CD14-positive monocyte (primary cell): ENCODE measurements at regions of chr14 and their contacts with region 1.

Region 1: GRCh38 chr14:96735526-96735925 is 61.7 kb upstream of the VRK1 start:
- DNase-seq: no peak
- H3K4me3 ChIP-seq: no peak overlapping the region
- H3K4me3 Mint-ChIP-seq: peak overlapping the region in 1 of 2 donors; percentile 41
- H3K27ac ChIP-seq: no peak overlapping the region
- H3K27ac Mint-ChIP-seq: no peak overlapping the region
- H3K4me1 ChIP-seq: peaks cover 8 to 9% of the 10 kb centered on the region in 2 donors
- H3K4me1 Mint-ChIP-seq: peaks cover 11% of the 10 kb centered on the region
- H3K27me3 ChIP-seq: peaks cover 16 to 29% of the 10 kb centered on the region in 2 donors
- H3K27me3 Mint-ChIP-seq: peaks cover 30 to 60% (median 45%) of the 10 kb centered on the region in 3 donors
- CTCF ChIP-seq: no peak

Region 2: GRCh38 chr14:96442355-96442754 is 293.2 kb before region 1 on chr14:
- intact Hi-C with region 1: no loop called
- DNase-seq: no peak
- H3K4me3 ChIP-seq: no peak overlapping the region
- H3K4me3 Mint-ChIP-seq: no peak overlapping the region
- H3K27ac ChIP-seq: no peak overlapping the region
- H3K27ac Mint-ChIP-seq: no peak overlapping the region
- H3K4me1 ChIP-seq: no peaks in the 10 kb centered on the region
- H3K4me1 Mint-ChIP-seq: peaks cover 1% of the 10 kb centered on the region
- H3K27me3 ChIP-seq: no peaks in the 10 kb centered on the region
- H3K27me3 Mint-ChIP-seq: peaks cover under 1 to 7% (median 5%) of the 10 kb centered on the region in 3 donors
- CTCF ChIP-seq: no peak

Region 3: DNA sequence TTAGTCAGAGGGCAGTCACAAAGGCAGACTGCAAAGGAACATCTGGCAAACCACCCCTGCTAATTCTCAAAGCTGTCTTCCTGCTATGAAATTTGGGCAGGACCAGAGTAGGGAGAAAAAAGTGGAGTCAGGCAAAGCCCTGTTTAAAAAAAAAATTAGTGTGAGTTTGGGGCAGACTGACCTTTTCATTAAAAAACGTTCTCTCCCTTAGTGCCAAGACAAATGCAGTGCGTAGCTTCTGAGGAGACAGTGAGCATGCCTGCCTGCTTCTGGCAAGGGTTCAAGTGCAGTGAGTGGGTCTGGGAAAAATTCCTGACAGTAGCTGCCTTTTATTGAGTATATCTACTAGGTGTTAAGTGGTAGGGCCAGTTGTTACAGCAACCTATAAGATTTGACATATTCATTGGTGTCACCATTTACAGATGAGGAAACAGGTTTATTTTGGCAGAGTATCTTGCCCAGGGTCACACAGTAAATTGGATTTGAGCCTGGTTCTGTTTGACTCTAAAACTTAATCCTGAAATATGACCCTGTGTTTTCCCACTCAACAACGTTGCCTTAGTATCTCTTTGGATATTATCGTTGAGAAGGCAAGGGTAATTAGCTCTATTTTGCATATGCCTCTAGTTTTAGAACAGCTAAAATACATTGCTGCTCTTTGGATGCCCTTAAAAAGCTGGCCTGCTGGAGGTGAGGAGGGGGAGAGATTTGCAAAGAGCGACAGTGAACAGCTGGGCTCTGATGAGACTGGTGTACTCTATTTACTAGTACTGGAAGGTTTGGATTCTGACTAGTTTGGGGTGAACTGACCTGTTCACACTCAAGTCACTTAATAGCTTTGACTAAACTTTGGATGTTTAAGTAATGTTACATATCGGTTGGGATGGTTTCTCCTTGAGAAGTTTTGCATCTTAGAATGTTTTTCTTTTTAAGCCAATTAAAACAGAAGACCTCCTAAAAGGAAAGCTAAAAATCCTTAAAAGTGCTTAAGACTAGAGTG is 160.6 kb before region 1 on chr14:
- intact Hi-C with region 1: loop called in 1 of 2 experiments (anchors 10 kb)
- DNase-seq: no peak
- H3K4me3 ChIP-seq: no peak overlapping the region
- H3K4me3 Mint-ChIP-seq: no peak overlapping the region
- H3K27ac ChIP-seq: no peak overlapping the region
- H3K27ac Mint-ChIP-seq: peak overlapping the region in 2 of 7 donors; percentile 12 to 28
- H3K4me1 ChIP-seq: no peaks in the 10 kb centered on the region
- H3K4me1 Mint-ChIP-seq: no peaks in the 10 kb centered on the region
- H3K27me3 ChIP-seq: no peaks in the 10 kb centered on the region
- H3K27me3 Mint-ChIP-seq: peaks cover 0 to 2% (median 0%) of the 10 kb centered on the region in 3 donors
- CTCF ChIP-seq: no peak